ENCODE measurements at regions of chr19 and their contacts with region 1.

Region 1: GRCh38 chr19:38335949-38336637 is 463 bp downstream of the CATSPERG start:
- DNase-seq: peak; percentile 93 to 97 (median 94)
- H3K4me3 ChIP-seq: peak overlapping the region; percentile 79 to 88
- H3K4me3 Mint-ChIP-seq: peak overlapping the region; percentile 93 to 99 (median 96)
- H3K27ac ChIP-seq: peak overlapping the region; percentile 83
- H3K27ac Mint-ChIP-seq: peak overlapping the region; percentile 94 to 100 (median 99)
- H3K4me1 ChIP-seq: peaks cover 7% of the 10 kb centered on the region
- H3K4me1 Mint-ChIP-seq: peaks cover 11 to 20% (median 16%) of the 10 kb centered on the region in 4 donors
- H3K27me3 ChIP-seq: no peaks in the 10 kb centered on the region
- H3K27me3 Mint-ChIP-seq: no peaks in the 10 kb centered on the region

Region 2: GRCh38 chr19:37906869-37907734 is 429.0 kb before region 1 on chr19 and contains the start of gene SIPA1L3:
- CTCF ChIA-PET with region 1: interaction called, 8 read pairs
- POLR2A ChIA-PET with region 1: interaction called, 5 read pairs
- intact Hi-C with region 1: loop called (anchors 1 kb)
- DNase-seq: peak; percentile 89 to 92 (median 90)
- H3K4me3 ChIP-seq: peak within 1 kb of the TSS; percentile 63 to 96
- H3K4me3 Mint-ChIP-seq: peak within 1 kb of the TSS; percentile 92 to 96 (median 93)
- H3K27ac ChIP-seq: peak within 1 kb of the TSS; percentile 71
- H3K27ac Mint-ChIP-seq: peak within 1 kb of the TSS; percentile 86 to 95 (median 91)
- H3K4me1 ChIP-seq: peaks cover 22% of the 10 kb centered on the region
- H3K4me1 Mint-ChIP-seq: peaks cover 16 to 36% (median 25%) of the 10 kb centered on the region in 4 donors
- H3K27me3 ChIP-seq: no peaks in the 10 kb centered on the region
- H3K27me3 Mint-ChIP-seq: no peaks in the 10 kb centered on the region
- total RNA-seq, gene SIPA1L3: 31.8 to 35.0 TPM

Region 3: GRCh38 chr19:38229585-38230073 is 106.5 kb before region 1 on chr19:
- CTCF ChIA-PET with region 1: interaction called, 14 read pairs
- POLR2A ChIA-PET with region 1: no interaction called
- intact Hi-C with region 1: no loop called
- DNase-seq: peak; percentile 45 to 61 (median 52)
- H3K4me3 ChIP-seq: no peak overlapping the region
- H3K4me3 Mint-ChIP-seq: peak overlapping the region in 7 of 8 donors; percentile 40 to 73 (median 62)
- H3K27ac ChIP-seq: no peak overlapping the region
- H3K27ac Mint-ChIP-seq: peak overlapping the region in 3 of 7 donors; percentile 44 to 75 (median 47)
- H3K4me1 ChIP-seq: peaks cover 8% of the 10 kb centered on the region
- H3K4me1 Mint-ChIP-seq: peaks cover 3 to 14% (median 8%) of the 10 kb centered on the region in 4 donors
- H3K27me3 ChIP-seq: peaks cover 30% of the 10 kb centered on the region
- H3K27me3 Mint-ChIP-seq: peaks cover 31 to 32% of the 10 kb centered on the region in 2 donors

Region 4: GRCh38 chr19:38263689-38264485 is 72.2 kb before region 1 on chr19:
- CTCF ChIA-PET with region 1: no interaction called
- POLR2A ChIA-PET with region 1: no interaction called
- intact Hi-C with region 1: loop called (anchors 1 kb)
- DNase-seq: peak in 4 of 5 donors; percentile 76 to 81 (median 78)
- H3K4me3 ChIP-seq: peak overlapping the region in 1 of 2 donors; percentile 65
- H3K4me3 Mint-ChIP-seq: peak overlapping the region; percentile 82 to 89 (median 86)
- H3K27ac ChIP-seq: peak overlapping the region; percentile 44
- H3K27ac Mint-ChIP-seq: peak overlapping the region; percentile 66 to 92 (median 78)
- H3K4me1 ChIP-seq: peaks cover 21% of the 10 kb centered on the region
- H3K4me1 Mint-ChIP-seq: peaks cover 17 to 33% (median 28%) of the 10 kb centered on the region in 4 donors
- H3K27me3 ChIP-seq: no peaks in the 10 kb centered on the region
- H3K27me3 Mint-ChIP-seq: peaks cover 1 to 3% of the 10 kb centered on the region in 2 donors

Region 5: DNA sequence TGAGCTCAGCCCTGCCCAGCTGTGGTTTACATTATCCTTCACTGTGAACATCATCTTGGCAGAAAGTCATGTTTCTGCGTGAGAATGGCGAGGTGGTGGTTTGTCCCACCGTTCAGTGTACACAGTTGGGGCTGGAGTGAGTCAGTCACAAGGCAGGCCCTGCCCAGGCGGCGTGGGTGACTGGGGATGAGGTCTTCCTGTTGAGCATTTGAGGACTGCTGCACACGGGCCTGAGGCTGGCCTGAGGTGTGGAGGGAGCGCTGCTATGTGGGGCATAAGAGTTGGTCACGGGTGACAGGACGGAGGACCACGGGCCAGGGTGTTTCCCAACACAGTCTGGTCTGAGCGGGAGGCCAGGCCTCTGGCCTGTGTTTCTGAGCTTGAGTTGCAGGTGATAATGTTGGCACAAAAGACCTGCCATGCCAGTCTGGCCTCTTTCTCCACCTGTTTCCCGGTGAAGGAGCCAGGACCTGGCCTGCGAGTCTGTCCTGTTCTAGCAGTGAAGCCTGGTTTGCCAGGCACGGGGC is 45.4 kb before region 1 on chr19:
- CTCF ChIA-PET with region 1: no interaction called
- POLR2A ChIA-PET with region 1: no interaction called
- intact Hi-C with region 1: no loop called
- DNase-seq: no peak
- H3K4me3 ChIP-seq: no peak overlapping the region
- H3K4me3 Mint-ChIP-seq: no peak overlapping the region
- H3K27ac ChIP-seq: no peak overlapping the region
- H3K27ac Mint-ChIP-seq: no peak overlapping the region
- H3K4me1 ChIP-seq: no peaks in the 10 kb centered on the region
- H3K4me1 Mint-ChIP-seq: no peaks in the 10 kb centered on the region
- H3K27me3 ChIP-seq: no peaks in the 10 kb centered on the region
- H3K27me3 Mint-ChIP-seq: no peaks in the 10 kb centered on the region

Region 6: GRCh38 chr19:38374429-38375176 is 38.5 kb after region 1 on chr19 and contains the start of gene PSMD8:
- CTCF ChIA-PET with region 1: interaction called, 24 read pairs
- POLR2A ChIA-PET with region 1: interaction called, 90 read pairs
- intact Hi-C with region 1: loop called (anchors 1 kb)
- DNase-seq: peak; percentile 98 to 99 (median 99)
- H3K4me3 ChIP-seq: peak within 1 kb of the TSS; percentile 71 to 97
- H3K4me3 Mint-ChIP-seq: peak within 1 kb of the TSS; percentile 96 to 99 (median 98)
- H3K27ac ChIP-seq: peak within 1 kb of the TSS; percentile 94
- H3K27ac Mint-ChIP-seq: peak within 1 kb of the TSS; percentile 90 to 99 (median 98)
- H3K4me1 ChIP-seq: peaks cover 30% of the 10 kb centered on the region
- H3K4me1 Mint-ChIP-seq: peaks cover 19 to 34% (median 24%) of the 10 kb centered on the region in 4 donors
- H3K27me3 ChIP-seq: no peaks in the 10 kb centered on the region
- H3K27me3 Mint-ChIP-seq: peaks cover 2% of the 10 kb centered on the region in 2 donors
- total RNA-seq, gene PSMD8: 89.6 to 90.6 TPM

Region 7: GRCh38 chr19:38647368-38647965 is 311.4 kb after region 1 on chr19 and contains the start of gene ACTN4:
- CTCF ChIA-PET with region 1: no interaction called
- POLR2A ChIA-PET with region 1: no interaction called
- intact Hi-C with region 1: loop called (anchors 1 kb)
- DNase-seq: peak; percentile 98 to 100 (median 100)
- H3K4me3 ChIP-seq: peak within 1 kb of the TSS; percentile 80 to 81
- H3K4me3 Mint-ChIP-seq: peak within 1 kb of the TSS; percentile 91 to 98 (median 95)
- H3K27ac ChIP-seq: peak within 1 kb of the TSS; percentile 74
- H3K27ac Mint-ChIP-seq: peak within 1 kb of the TSS; percentile 85 to 94 (median 91)
- H3K4me1 ChIP-seq: peaks cover 50% of the 10 kb centered on the region
- H3K4me1 Mint-ChIP-seq: peaks cover 29 to 52% (median 41%) of the 10 kb centered on the region in 4 donors
- H3K27me3 ChIP-seq: no peaks in the 10 kb centered on the region
- H3K27me3 Mint-ChIP-seq: no peaks in the 10 kb centered on the region
- total RNA-seq, gene ACTN4: 151 to 155 TPM